ENCODE measurements at regions of chr6 and their contacts with region 1.

Region 1: DNA sequence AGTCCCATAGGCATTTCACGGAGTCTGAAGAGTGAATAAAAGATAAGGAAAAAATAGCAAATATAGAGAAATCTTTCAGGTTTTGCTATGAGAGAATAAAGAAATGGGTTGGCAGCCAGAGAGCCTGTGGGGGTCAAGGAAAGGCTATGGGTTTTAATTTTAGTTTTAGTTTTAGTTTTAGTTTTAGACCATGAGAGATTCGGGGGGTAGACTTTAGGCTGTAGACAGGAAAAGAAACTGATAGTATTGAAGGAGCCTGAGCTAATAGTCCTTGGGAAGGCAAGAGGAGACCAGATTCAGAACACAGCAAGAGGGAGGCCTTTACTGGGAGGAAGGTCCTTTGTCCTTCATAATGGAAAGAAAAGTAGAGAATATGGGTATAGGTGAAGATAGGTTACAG is 19.3 kb downstream of the DOP1A start:
- DNase-seq: no peak
- H3K4me3 ChIP-seq: no peak overlapping the region
- H3K27ac ChIP-seq: no peak overlapping the region
- H3K4me1 ChIP-seq: no peaks in the 10 kb centered on the region
- H3K27me3 ChIP-seq: no peaks in the 10 kb centered on the region
- CTCF ChIP-seq: no peak
- POLR2A ChIP-seq: no peak

Region 2: GRCh38 chr6:83042467-83043053 is 44.2 kb before region 1 on chr6:
- intact Hi-C with region 1: no loop called
- DNase-seq: no peak
- H3K4me3 ChIP-seq: no peak overlapping the region
- H3K27ac ChIP-seq: no peak overlapping the region
- H3K4me1 ChIP-seq: no peaks in the 10 kb centered on the region
- H3K27me3 ChIP-seq: no peaks in the 10 kb centered on the region
- CTCF ChIP-seq: no peak
- POLR2A ChIP-seq: no peak

Region 3: DNA sequence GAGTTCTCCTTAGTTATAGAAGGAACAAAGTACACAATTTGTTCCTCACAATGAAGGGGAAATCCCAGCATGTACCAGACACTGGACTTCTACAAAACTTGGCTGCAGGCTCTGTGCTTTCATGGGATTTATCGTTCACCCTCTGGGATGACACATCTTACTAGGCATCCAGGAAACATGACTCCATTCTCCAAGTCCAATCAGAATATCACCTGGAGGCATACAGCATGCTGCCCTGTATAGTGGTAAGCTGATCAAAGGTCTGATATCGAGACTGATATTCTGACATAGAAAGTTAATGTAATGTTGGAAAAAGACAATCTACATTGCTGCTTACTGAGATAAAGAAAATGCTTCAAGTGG is 113.1 kb after region 1 on chr6:
- intact Hi-C with region 1: loop called in 1 of 2 experiments (anchors 10 kb)
- DNase-seq: peak in 4 of 7 donors; percentile 18 to 58 (median 40)
- H3K4me3 ChIP-seq: no peak overlapping the region
- H3K27ac ChIP-seq: peak overlapping the region in 1 of 5 donors; percentile 18
- H3K4me1 ChIP-seq: peaks cover 0 to 6% of the 10 kb centered on the region in 2 donors
- H3K27me3 ChIP-seq: no peaks in the 10 kb centered on the region
- CTCF ChIP-seq: no peak
- POLR2A ChIP-seq: no peak

Measured in adrenal gland (tissue), 19 donors.